Activated CD8-positive, alpha-beta memory T cell treated with anti-CD3 and anti-CD28 coated beads, Interleukin-2, amount 10 ng/mL, durations not matched to agents 7 days and 5 days (primary cell): ENCODE measurements at regions of chr10 and their contacts with region 1.

Region 1: GRCh38 chr10:6202684-6203330 is at the start of gene PFKFB3:
- DNase-seq: peak; percentile 95
- ATAC-seq: peak; percentile 70
- H3K4me3 Mint-ChIP-seq: peak within 1 kb of the TSS; percentile 98
- H3K27ac Mint-ChIP-seq: peak within 1 kb of the TSS; percentile 93
- H3K4me1 Mint-ChIP-seq: peaks cover 36% of the 10 kb centered on the region
- H3K27me3 Mint-ChIP-seq: no peaks in the 10 kb centered on the region
- total RNA-seq, gene PFKFB3: 57.1 to 59.3 TPM

Region 2: DNA sequence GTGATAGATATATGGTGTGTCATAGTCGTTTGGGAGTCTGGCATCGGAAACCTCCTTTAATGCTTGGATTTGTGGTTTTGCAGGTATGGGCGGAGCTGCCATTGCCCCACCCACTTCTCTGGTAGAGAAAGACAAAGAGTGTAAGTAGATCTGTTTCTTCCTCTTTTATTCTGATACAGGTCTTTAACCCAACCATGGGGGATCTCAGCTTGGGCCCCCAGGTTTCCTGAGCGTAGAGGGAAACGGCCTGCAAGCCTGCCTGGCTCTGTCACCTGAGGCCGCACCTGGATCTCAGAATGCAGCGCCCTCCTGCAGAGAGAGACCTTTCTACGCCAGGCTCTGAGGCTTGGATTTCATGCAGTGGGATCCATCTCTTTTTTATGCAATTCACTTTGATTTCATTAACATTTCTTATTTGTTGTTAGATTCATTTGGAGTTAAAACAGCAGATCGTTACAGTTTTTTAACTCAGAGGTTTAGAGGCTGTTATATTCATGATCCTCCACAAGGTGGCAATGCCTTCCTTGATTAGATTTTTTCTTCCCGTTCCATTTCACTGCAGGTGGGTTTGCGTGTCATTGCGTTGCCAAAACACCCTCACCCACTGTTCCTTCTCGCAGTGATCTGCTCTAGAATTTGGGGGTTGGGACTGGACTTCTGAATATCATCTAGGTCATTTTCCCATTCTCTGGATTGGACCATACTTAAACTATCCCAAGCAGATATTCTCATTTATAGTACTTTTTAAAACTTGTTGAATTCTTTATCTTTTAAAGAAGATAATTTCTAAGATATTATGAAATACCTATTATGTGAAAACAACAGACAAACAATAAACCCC is 94.0 kb before region 1 on chr10:
- CTCF ChIA-PET with region 1: interaction called, 12 read pairs
- DNase-seq: peak; percentile 54
- ATAC-seq: peak; percentile 53
- H3K4me3 Mint-ChIP-seq: no peak overlapping the region
- H3K27ac Mint-ChIP-seq: peak overlapping the region; percentile 77
- H3K4me1 Mint-ChIP-seq: peaks cover 34% of the 10 kb centered on the region
- H3K27me3 Mint-ChIP-seq: no peaks in the 10 kb centered on the region

Region 3: DNA sequence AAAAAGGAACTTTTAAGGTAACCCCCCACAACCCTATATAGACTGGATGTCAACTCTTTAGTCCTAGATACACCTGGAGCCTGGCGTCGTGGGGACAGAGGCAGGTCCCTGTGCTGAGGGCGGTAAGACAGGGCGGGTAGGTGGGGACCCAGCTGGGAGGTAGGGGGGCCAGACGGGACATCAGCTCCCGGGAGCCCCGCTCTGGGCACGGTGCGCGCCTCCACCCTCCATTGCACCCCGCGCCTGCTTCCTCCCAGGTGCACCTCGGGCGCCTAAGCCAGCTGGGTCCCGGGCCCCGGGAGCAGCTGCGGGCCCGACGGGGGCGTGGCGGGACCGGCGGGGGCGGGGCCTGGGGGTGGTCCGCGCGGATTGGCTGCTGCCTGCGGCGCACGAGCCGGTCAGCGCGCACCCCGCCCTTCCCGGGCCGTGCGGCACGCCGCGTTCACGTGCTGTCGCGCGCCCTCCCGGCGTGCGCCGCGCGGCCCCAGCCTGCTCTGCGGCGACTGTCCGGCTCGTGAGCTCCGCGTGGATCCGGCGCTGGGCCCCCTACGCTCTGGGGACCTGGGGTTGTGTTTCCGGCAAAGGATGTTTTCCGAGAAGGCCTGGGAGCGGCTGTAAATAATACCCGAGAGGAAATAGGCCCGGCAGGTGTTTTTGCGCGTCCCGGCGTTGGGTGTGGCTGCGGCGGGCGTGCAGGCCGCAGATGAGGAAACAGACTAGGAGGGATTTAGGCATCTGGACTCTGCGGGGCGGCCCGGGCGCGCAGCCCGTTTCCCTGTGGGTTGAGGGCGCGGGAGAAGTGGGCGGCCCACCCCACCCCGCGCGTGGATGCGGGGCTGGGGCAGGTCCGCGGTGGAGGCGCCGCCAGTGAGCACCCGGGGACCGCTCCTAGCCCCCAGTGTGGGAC is 39.2 kb before region 1 on chr10:
- CTCF ChIA-PET with region 1: interaction called, 24 read pairs
- DNase-seq: peak; percentile 94
- ATAC-seq: peak; percentile 98
- H3K4me3 Mint-ChIP-seq: peak overlapping the region; percentile 86
- H3K27ac Mint-ChIP-seq: peak overlapping the region; percentile 86
- H3K4me1 Mint-ChIP-seq: peaks cover 36% of the 10 kb centered on the region
- H3K27me3 Mint-ChIP-seq: no peaks in the 10 kb centered on the region

Region 4: GRCh38 chr10:6218692-6219493 is 16.1 kb after region 1 on chr10:
- CTCF ChIA-PET with region 1: interaction called, 12 read pairs
- DNase-seq: no peak
- ATAC-seq: no peak
- H3K4me3 Mint-ChIP-seq: no peak overlapping the region
- H3K27ac Mint-ChIP-seq: no peak overlapping the region
- H3K4me1 Mint-ChIP-seq: no peaks in the 10 kb centered on the region
- H3K27me3 Mint-ChIP-seq: no peaks in the 10 kb centered on the region

Region 5: DNA sequence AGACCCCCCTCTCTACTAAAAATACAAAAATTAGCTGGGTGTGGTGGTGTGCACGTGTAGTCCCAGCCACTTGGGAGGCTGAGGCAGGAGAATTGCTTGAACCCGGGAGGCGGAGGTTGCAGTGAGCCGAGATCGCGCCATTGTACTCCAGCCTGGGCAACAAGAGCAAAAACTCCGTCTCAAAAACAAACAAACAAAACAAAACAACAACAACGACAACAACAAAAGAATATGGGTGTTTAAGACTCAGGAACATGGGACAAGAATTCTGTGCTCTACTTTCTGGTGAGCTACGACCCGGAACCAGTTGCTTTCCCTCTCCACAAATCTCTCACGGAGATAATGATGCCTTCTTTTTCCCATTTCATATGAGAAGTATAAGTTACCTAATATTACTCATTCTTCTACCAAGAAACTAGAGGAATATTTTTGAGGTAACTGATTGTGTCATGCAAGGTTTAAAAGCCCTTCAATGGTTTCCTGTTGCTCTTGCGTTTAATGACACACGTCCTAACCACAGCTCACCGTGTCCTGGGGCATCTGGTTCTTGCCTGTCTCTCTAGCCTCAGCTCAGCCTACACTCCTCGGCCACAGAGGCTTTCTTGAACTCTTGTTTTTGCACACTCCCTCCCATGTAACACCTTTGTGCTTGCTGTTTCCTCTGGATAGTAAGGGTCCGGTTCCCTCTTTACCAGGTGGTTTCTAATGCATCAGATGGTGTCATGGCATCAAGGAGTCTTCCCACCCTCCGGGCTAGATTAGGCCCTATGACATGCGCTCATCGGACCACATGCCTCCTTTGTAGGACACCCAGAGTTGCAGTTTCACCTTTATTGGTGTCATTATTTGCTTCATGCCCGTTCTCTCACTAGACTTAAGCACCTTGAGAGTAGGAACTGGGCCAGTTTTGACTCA is 67.4 kb after region 1 on chr10:
- CTCF ChIA-PET with region 1: interaction called, 21 read pairs
- DNase-seq: peak; percentile 95
- ATAC-seq: peak; percentile 79
- H3K4me3 Mint-ChIP-seq: peak overlapping the region; percentile 46
- H3K27ac Mint-ChIP-seq: peak overlapping the region; percentile 93
- H3K4me1 Mint-ChIP-seq: peaks cover 68% of the 10 kb centered on the region
- H3K27me3 Mint-ChIP-seq: peaks cover 5% of the 10 kb centered on the region

Region 6: DNA sequence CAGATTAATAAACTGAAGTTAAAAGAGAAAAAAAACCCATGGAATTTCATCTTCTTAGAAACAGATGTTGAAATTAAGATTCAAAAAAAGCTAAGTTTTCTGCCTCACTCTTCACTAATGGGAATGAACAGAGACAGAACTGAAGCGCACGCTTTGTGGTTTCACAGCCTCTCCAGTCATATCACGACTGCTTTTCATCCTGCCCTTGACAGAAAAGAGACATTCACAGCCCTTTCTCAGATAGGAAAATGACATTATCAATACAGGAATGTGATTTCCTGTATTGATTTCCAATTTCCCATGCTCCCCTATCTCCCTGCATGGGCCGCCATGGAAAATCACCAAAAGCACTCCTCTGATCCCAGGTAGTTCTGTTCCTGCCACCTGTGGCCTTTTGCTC is 108.2 kb after region 1 on chr10:
- CTCF ChIA-PET with region 1: no interaction called
- DNase-seq: no peak
- ATAC-seq: no peak
- H3K4me3 Mint-ChIP-seq: no peak overlapping the region
- H3K27ac Mint-ChIP-seq: no peak overlapping the region
- H3K4me1 Mint-ChIP-seq: peaks cover 10% of the 10 kb centered on the region
- H3K27me3 Mint-ChIP-seq: no peaks in the 10 kb centered on the region

Region 7: DNA sequence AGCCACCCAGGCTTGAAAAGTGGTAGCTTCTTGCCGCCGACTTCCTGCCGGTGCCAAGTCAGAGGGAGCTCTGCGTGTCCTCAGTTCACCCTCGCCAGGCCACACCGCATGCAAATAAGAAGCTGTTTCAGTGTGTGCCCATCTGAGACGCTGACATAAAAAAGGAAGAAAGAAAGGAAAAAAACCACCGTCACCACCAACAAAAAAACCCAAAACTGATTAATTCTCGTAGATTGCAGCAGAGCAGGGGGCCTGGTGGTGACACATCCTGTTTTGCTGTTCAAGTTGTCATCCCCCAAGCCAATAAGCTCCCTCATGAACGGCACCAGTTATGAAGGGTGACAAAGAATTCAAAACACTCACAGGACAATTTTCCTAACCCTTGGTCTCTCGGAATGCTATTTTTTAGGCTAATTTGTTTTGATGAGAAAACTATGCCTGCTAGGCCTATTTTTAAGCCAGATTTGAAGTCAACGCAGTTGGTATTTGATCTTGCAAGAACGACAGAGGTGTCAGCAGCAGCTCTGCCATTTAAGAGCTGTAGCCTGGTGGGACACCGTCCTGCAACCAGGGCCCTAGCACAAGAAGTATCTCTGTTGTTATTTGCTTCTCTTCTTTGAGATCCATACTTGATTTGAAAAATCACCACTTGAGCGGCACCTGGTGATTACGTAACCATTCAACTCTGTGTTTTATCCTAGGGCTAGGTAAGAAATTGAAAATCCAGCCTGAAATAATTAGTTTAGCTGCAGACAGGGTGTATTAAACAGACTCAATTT is 145.5 kb after region 1 on chr10:
- CTCF ChIA-PET with region 1: interaction called, 31 read pairs
- DNase-seq: peak; percentile 91
- ATAC-seq: peak; percentile 94
- H3K4me3 Mint-ChIP-seq: peak overlapping the region; percentile 69
- H3K27ac Mint-ChIP-seq: peak overlapping the region; percentile 93
- H3K4me1 Mint-ChIP-seq: peaks cover 39% of the 10 kb centered on the region
- H3K27me3 Mint-ChIP-seq: no peaks in the 10 kb centered on the region

Region 8: GRCh38 chr10:6409971-6410651 is 207.3 kb after region 1 on chr10:
- CTCF ChIA-PET with region 1: interaction called, 67 read pairs
- DNase-seq: peak; percentile 73
- ATAC-seq: peak; percentile 94
- H3K4me3 Mint-ChIP-seq: peak overlapping the region; percentile 41
- H3K27ac Mint-ChIP-seq: peak overlapping the region; percentile 78
- H3K4me1 Mint-ChIP-seq: peaks cover 43% of the 10 kb centered on the region
- H3K27me3 Mint-ChIP-seq: peaks cover 2% of the 10 kb centered on the region